Gastrocnemius medialis (tissue), 4 donors: ENCODE measurements at regions of chr7 and their contacts with region 1.

Region 1: GRCh38 chr7:99143853-99144672 is at the start of gene SMURF1:
- DNase-seq: peak; percentile 28 to 55
- ATAC-seq: peak; percentile 74 to 77
- H3K4me3 ChIP-seq: peak within 1 kb of the TSS; percentile 68 to 95 (median 75)
- H3K27ac ChIP-seq: peak within 1 kb of the TSS; percentile 87 to 99 (median 92)
- H3K4me1 ChIP-seq: peaks cover 17 to 36% of the 10 kb centered on the region in 2 donors
- H3K27me3 ChIP-seq: no peaks in the 10 kb centered on the region
- CTCF ChIP-seq: no peak
- POLR2A ChIP-seq: peak; percentile 70 to 72
- total RNA-seq, gene SMURF1: 15.4 to 44.8 (median 18.3) TPM

Region 2: DNA sequence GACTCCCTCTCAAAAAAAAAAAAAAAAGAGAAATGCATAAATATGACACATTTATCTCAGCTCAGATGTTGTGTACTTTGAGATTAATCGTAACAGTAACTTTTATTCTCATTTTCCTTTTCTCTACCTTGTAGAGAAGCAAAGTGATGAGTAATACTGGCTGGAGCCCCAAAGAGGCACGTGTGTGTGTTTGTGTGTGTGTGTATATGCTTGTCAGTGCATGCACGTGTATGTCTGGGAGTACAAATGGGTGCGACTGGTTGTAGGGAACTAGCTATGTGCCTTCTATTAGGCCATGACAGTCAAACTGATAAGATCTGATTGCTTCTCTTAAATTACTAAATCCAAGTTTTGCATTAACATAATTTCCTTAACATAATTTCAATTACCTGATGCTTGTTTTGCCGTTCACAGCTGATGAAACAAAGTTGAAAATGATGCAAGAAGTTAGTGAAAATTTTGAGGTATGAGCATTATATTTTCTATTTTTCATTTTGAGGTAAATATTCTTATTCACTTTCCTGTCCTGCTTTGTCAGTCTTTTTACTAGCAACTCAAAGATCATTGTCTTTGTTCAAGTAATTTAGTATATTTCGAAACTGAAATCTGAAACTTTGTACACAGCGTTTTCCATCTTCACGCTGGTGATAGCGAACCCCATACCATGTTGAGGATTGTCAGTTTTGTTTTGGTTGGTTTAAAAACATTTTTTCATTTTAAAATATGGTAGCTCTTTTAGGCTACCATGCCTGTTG is 262.3 kb before region 1 on chr7:
- in situ Hi-C with region 1: no loop called
- intact Hi-C with region 1: no loop called
- DNase-seq: no peak
- ATAC-seq: no peak
- H3K4me3 ChIP-seq: no peak overlapping the region
- H3K27ac ChIP-seq: no peak overlapping the region
- H3K4me1 ChIP-seq: peaks cover 13 to 16% of the 10 kb centered on the region in 2 donors
- H3K27me3 ChIP-seq: no peaks in the 10 kb centered on the region
- CTCF ChIP-seq: no peak
- POLR2A ChIP-seq: no peak

Region 3: DNA sequence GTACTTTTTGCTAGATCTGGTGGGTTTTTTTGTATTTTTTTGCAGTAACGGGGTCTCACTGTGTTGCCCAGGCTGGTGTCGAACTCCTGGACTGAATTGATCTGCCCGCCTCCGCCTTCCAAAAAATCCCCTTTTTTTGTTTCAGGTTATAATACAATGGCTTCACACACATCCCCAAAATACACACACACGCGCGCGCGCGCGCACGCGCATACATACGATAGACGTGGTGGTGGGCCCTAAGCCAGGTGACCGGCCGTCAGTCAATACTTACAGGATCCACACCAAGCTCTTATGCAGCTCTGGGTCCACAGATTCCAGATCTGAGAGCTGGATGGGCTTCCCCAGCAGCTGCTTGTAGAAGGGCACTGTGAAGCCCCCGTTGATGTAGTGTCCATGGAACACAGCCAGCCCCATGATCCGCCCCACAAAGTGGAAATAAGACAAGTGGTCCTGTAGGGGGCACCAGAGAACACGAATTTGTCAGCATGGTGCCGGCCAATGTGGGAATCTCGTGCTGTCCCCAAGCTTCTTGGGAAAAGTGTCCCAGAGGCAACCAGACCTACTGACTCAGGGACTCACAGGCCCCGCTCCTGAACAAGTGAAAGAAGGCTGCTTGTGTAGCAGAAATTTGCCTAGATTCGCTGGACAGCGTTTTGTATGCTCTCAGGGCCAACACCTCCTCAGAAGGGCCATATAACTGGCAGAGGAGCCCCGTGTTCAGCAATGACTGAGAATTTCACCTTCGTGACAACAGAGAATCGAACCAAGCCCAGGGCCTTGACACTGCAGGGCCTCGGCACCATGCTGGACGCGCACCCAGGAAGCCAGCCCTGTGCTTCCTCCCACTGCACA is 103.7 kb before region 1 on chr7:
- in situ Hi-C with region 1: loop called in 1 of 4 experiments (anchors 10 kb)
- intact Hi-C with region 1: loop called (anchors 2 kb)
- DNase-seq: peak; percentile 75 to 86
- ATAC-seq: peak; percentile 88 to 94
- H3K4me3 ChIP-seq: no peak overlapping the region
- H3K27ac ChIP-seq: peak overlapping the region; percentile 41 to 73 (median 66)
- H3K4me1 ChIP-seq: no peaks in the 10 kb centered on the region
- H3K27me3 ChIP-seq: no peaks in the 10 kb centered on the region
- CTCF ChIP-seq: peak; percentile 75 to 87 (median 83)
- POLR2A ChIP-seq: no peak

Region 4: GRCh38 chr7:99061001-99061776 is 82.9 kb before region 1 on chr7:
- in situ Hi-C with region 1: no loop called
- intact Hi-C with region 1: loop called (anchors 2 kb)
- DNase-seq: no peak
- ATAC-seq: no peak
- H3K4me3 ChIP-seq: no peak overlapping the region
- H3K27ac ChIP-seq: no peak overlapping the region
- H3K4me1 ChIP-seq: no peaks in the 10 kb centered on the region
- H3K27me3 ChIP-seq: no peaks in the 10 kb centered on the region
- CTCF ChIP-seq: no peak
- POLR2A ChIP-seq: no peak

Region 5: DNA sequence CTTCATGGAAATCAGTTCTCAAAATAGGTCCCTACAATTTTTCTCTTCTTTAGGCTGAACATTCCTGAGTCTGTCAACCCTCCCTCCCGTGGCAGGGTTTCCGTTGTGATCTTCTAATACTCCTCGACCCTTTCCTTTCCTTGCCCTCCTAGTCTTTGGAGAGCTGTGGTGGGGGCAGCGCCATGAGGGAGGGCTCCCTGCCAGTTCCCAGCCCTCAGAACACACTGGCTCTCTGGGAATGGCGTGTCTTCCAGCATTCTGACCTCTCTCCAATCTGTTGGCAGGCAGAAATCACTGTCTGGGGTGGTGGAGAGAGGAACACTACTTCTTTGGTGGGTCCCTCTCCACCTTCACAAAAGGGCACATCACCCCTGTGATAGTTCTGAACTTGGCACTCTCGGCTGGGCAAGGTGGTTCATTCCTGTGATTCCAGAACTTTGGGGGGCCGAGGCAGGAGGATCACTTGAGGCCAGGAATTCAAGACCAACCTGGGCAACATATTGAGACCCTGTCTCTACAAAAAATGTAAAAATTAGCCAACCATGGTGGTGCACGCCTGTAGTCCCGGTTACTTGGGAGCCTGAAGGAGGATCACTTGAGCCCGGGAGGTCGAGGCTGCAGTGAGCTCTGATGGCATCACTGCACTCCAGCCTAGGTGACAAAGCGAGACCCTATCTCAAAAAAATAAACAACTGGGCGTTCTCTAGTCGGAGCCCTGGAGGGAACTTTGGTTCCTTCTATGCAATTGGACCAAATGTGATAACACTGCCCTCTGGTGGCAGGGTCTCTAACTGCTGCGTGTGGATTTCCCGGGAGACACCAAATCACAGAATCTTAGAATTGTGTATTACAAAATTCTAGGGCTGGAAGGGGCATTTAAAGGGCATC is 168.5 kb after region 1 on chr7:
- in situ Hi-C with region 1: loop called in 1 of 4 experiments (anchors 25 kb)
- intact Hi-C with region 1: no loop called
- DNase-seq: peak in 1 of 2 donors; percentile 50
- ATAC-seq: peak; percentile 63 to 64
- H3K4me3 ChIP-seq: no peak overlapping the region
- H3K27ac ChIP-seq: no peak overlapping the region
- H3K4me1 ChIP-seq: no peaks in the 10 kb centered on the region
- H3K27me3 ChIP-seq: no peaks in the 10 kb centered on the region
- CTCF ChIP-seq: peak; percentile 80 to 92 (median 87)
- POLR2A ChIP-seq: no peak

Region 6: GRCh38 chr7:99325545-99326407 is 181.7 kb after region 1 on chr7 and contains the start of gene ARPC1A:
- in situ Hi-C with region 1: loop called in 1 of 4 experiments (anchors 25 kb)
- intact Hi-C with region 1: loop called (anchors 5 kb)
- DNase-seq: peak; percentile 82 to 88
- ATAC-seq: peak; percentile 93 to 97
- H3K4me3 ChIP-seq: peak within 1 kb of the TSS; percentile 97 to 99 (median 98)
- H3K27ac ChIP-seq: peak within 1 kb of the TSS; percentile 88 to 95 (median 94)
- H3K4me1 ChIP-seq: peaks cover 53 to 54% of the 10 kb centered on the region in 2 donors
- H3K27me3 ChIP-seq: no peaks in the 10 kb centered on the region
- CTCF ChIP-seq: peak; percentile 28 to 39 (median 30)
- POLR2A ChIP-seq: peak; percentile 60 to 76
- total RNA-seq, gene ARPC1A: 37.0 to 58.8 (median 44.1) TPM

Region 7: GRCh38 chr7:99579956-99580777 is 436.1 kb after region 1 on chr7:
- in situ Hi-C with region 1: no loop called
- intact Hi-C with region 1: no loop called
- DNase-seq: no peak
- ATAC-seq: peak; percentile 29 to 31
- H3K4me3 ChIP-seq: peak overlapping the region; percentile 62 to 74 (median 70)
- H3K27ac ChIP-seq: peak overlapping the region in 1 of 4 donors; percentile 53
- H3K4me1 ChIP-seq: peaks cover 26 to 27% of the 10 kb centered on the region in 2 donors
- H3K27me3 ChIP-seq: no peaks in the 10 kb centered on the region
- CTCF ChIP-seq: peak in 2 of 5 experiments; percentile 18 to 49
- POLR2A ChIP-seq: no peak

Region 8: GRCh38 chr7:99616359-99617191 is 472.5 kb after region 1 on chr7 and contains the start of gene ZSCAN25:
- in situ Hi-C with region 1: no loop called
- intact Hi-C with region 1: loop called (anchors 2 kb)
- DNase-seq: peak; percentile 78 to 85
- ATAC-seq: peak; percentile 98
- H3K4me3 ChIP-seq: peak within 1 kb of the TSS; percentile 97 to 99 (median 98)
- H3K27ac ChIP-seq: peak within 1 kb of the TSS; percentile 87 to 93 (median 91)
- H3K4me1 ChIP-seq: peaks cover 12 to 16% of the 10 kb centered on the region in 2 donors
- H3K27me3 ChIP-seq: no peaks in the 10 kb centered on the region
- CTCF ChIP-seq: peak in 2 of 5 experiments; percentile 18 to 50
- POLR2A ChIP-seq: peak; percentile 36 to 66
- total RNA-seq, gene ZSCAN25: 6.0 to 7.9 (median 7.2) TPM